WTC11 (cell line): ENCODE measurements at regions of chr12 and their contacts with region 1.

Region 1: DNA sequence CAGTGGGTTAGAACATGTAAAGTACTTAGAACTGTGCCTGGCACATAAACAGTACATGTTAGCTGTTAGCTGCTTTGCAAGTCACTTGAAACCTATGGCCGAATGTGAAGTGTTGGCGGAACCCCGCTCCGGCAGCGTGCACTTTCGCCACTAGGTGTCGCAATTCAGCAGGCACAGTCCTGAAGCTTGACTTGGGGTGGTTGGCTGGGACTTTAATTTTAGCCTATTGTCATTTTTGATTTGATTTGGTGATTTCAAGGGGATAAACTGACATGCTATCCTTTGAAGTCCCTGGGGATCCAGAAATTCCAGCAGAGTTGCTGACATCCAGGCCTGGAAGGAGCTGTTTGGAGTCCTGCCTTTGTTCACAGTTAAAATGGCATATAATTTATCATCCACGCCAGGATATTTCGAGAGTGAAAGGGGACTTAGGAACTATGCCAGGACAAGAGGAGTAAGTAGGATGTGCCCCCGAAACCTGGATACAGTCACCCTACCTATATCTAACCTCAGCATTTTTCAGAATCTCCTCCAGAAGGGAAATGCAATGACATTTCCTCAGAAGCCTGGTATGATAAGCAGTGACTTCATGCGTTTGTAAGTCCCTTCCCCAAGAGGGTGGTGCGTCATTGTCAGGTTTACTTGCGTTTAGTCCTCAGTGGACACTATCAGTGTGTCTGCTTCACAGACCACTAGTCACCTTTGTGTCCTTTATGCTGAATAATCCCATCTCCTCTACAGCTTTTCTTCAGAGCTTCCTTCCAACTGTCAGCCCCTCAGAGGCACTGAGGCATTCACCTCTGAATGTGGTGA is 3.5 kb upstream of the TSPAN9 start:
- DNase-seq: peak; percentile 92
- ATAC-seq: peak; percentile 48
- H3K4me3 Mint-ChIP-seq: no peak overlapping the region
- H3K27ac Mint-ChIP-seq: no peak overlapping the region
- H3K4me1 Mint-ChIP-seq: peaks cover 8% of the 10 kb centered on the region
- H3K27me3 Mint-ChIP-seq: peaks cover 19% of the 10 kb centered on the region
- CTCF ChIP-seq: peak; percentile 90

Region 2: GRCh38 chr12:3020850-3021435 is 52.7 kb before region 1 on chr12:
- CTCF ChIA-PET with region 1: no interaction called
- POLR2A ChIA-PET with region 1: no interaction called
- DNase-seq: no peak
- ATAC-seq: no peak
- H3K4me3 Mint-ChIP-seq: no peak overlapping the region
- H3K27ac Mint-ChIP-seq: peak overlapping the region; percentile 36; the same call in 1 of the 2 replicates
- H3K4me1 Mint-ChIP-seq: no peaks in the 10 kb centered on the region
- H3K27me3 Mint-ChIP-seq: no peaks in the 10 kb centered on the region
- CTCF ChIP-seq: no peak

Region 3: GRCh38 chr12:3060778-3061458 is 12.7 kb before region 1 on chr12:
- CTCF ChIA-PET with region 1: interaction called, 20 read pairs
- POLR2A ChIA-PET with region 1: interaction called, 3 read pairs
- DNase-seq: no peak
- ATAC-seq: no peak
- H3K4me3 Mint-ChIP-seq: no peak overlapping the region
- H3K27ac Mint-ChIP-seq: no peak overlapping the region
- H3K4me1 Mint-ChIP-seq: peaks cover 22% of the 10 kb centered on the region
- H3K27me3 Mint-ChIP-seq: peaks cover 2% of the 10 kb centered on the region; the same call in 1 of the 2 replicates
- CTCF ChIP-seq: no peak

Region 4: GRCh38 chr12:3105690-3106479 is 32.2 kb after region 1 on chr12:
- CTCF ChIA-PET with region 1: interaction called, 11 read pairs
- POLR2A ChIA-PET with region 1: no interaction called
- DNase-seq: no peak
- ATAC-seq: no peak
- H3K4me3 Mint-ChIP-seq: no peak overlapping the region
- H3K27ac Mint-ChIP-seq: peak overlapping the region; percentile 52; the same call in 1 of the 2 replicates
- H3K4me1 Mint-ChIP-seq: peaks cover 15% of the 10 kb centered on the region
- H3K27me3 Mint-ChIP-seq: no peaks in the 10 kb centered on the region
- CTCF ChIP-seq: no peak

Region 5: GRCh38 chr12:3135522-3136461 is 62.1 kb after region 1 on chr12:
- CTCF ChIA-PET with region 1: interaction called, 59 read pairs
- POLR2A ChIA-PET with region 1: no interaction called
- DNase-seq: peak; percentile 64
- ATAC-seq: peak; percentile 72
- H3K4me3 Mint-ChIP-seq: no peak overlapping the region
- H3K27ac Mint-ChIP-seq: no peak overlapping the region
- H3K4me1 Mint-ChIP-seq: peaks cover 61% of the 10 kb centered on the region
- H3K27me3 Mint-ChIP-seq: no peaks in the 10 kb centered on the region
- CTCF ChIP-seq: peak; percentile 82

Region 6: GRCh38 chr12:3218228-3219171 is 144.9 kb after region 1 on chr12:
- CTCF ChIA-PET with region 1: interaction called, 14 read pairs
- POLR2A ChIA-PET with region 1: no interaction called
- DNase-seq: no peak
- ATAC-seq: no peak
- H3K4me3 Mint-ChIP-seq: no peak overlapping the region
- H3K27ac Mint-ChIP-seq: peak overlapping the region; percentile 51
- H3K4me1 Mint-ChIP-seq: peaks cover 20% of the 10 kb centered on the region
- H3K27me3 Mint-ChIP-seq: no peaks in the 10 kb centered on the region
- CTCF ChIP-seq: no peak